Activated T-helper 1 cell treated with anti-CD3 and anti-CD28 coated beads, Interleukin-12 subunit alpha, Interleukin-12 subunit beta, Interleukin-2, Interleukin-4 antibody, amounts not matched to agents 30 ng/mL and 10 ng/mL and 1 ng/mL, durations not matched to agents 14 hours and 24 hours and 36 hours (primary cell): ENCODE measurements at regions of chr5 and their contacts with region 1.

Region 1: DNA sequence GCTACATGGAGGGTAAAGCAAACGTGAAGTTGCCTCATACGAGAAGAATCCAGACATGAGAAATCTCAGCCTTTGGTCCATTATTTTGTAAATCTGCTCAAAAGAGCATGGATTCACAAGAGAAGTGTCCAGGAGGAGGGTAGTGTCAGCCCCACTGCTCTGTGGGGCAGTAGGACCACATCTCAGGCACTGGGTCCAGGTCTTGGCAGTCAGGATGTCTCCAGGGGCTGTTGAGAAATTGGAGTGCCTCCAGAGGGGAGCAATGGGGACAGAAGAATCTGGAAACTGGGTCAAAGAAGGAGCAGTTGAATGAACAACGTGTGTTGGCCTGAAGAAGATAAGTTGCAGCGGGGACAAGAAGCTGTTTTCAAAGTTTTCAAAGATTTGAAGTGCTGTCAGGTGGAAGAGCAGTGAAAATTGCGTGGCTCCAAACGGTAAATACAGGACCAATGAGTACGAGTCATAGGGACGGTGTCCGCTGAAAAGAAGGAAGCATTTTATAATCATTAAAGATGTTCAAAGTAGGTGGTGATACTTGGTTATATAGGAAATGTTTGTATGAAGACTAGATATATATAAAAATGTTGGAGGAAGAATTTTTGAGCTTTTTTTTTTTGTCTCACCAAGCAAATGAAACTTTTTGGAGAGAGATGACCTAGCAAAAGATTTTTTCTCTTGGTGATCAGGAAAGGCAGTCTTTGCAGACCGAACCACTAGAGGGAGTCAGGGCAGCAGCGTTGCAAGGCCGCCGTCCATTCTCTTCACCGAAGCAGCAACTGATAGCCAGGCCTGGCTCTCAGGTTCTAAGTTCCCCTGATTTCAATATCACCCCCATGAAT is 57.1 kb upstream of the ZBED3 start:
- DNase-seq: peak; percentile 30
- H3K4me3 Mint-ChIP-seq: no peak overlapping the region
- H3K27ac Mint-ChIP-seq: no peak overlapping the region
- H3K4me1 Mint-ChIP-seq: peaks cover 13% of the 10 kb centered on the region
- H3K27me3 Mint-ChIP-seq: peaks cover 8% of the 10 kb centered on the region

Region 2: GRCh38 chr5:76867827-76868693 is 276.2 kb before region 1 on chr5:
- intact Hi-C with region 1: loop called (anchors 1 kb)
- DNase-seq: peak; percentile 50
- H3K4me3 Mint-ChIP-seq: no peak overlapping the region
- H3K27ac Mint-ChIP-seq: no peak overlapping the region
- H3K4me1 Mint-ChIP-seq: peaks cover 5% of the 10 kb centered on the region
- H3K27me3 Mint-ChIP-seq: peaks cover 2% of the 10 kb centered on the region

Region 3: GRCh38 chr5:77328930-77329647 is 184.9 kb after region 1 on chr5:
- intact Hi-C with region 1: loop called (anchors 10 kb)
- DNase-seq: no peak
- H3K4me3 Mint-ChIP-seq: peak overlapping the region; percentile 0
- H3K27ac Mint-ChIP-seq: peak overlapping the region; percentile 89
- H3K4me1 Mint-ChIP-seq: peaks cover 20% of the 10 kb centered on the region
- H3K27me3 Mint-ChIP-seq: peaks cover 8% of the 10 kb centered on the region

Region 4: DNA sequence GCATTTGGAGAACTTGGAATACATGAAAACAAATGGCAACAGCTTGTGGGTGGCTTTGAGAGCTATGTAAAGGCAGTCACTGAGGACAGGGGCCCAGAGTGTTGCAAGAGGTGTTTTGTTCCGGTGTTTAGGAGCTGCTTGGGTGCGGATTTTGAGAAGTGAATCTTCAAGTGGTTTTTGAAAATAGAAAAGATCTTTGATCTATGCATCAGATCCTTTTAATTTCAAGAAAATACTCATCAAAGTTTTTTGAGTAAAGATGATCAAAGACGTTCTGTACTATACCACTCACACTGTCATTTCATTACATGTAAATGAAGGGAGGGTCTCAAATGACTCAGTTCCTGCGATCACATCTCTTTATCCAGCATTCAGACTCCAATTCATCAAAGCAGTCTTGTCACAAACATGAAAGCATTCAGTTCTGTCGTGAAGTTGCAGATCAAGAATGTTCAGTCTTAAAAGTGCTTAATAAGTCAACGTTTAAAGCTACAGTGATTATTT is 235.4 kb after region 1 on chr5:
- intact Hi-C with region 1: loop called (anchors 1 kb)
- DNase-seq: peak; percentile 32
- H3K4me3 Mint-ChIP-seq: no peak overlapping the region
- H3K27ac Mint-ChIP-seq: peak overlapping the region; percentile 37
- H3K4me1 Mint-ChIP-seq: peaks cover 30% of the 10 kb centered on the region
- H3K27me3 Mint-ChIP-seq: peaks cover 2% of the 10 kb centered on the region

Region 5: DNA sequence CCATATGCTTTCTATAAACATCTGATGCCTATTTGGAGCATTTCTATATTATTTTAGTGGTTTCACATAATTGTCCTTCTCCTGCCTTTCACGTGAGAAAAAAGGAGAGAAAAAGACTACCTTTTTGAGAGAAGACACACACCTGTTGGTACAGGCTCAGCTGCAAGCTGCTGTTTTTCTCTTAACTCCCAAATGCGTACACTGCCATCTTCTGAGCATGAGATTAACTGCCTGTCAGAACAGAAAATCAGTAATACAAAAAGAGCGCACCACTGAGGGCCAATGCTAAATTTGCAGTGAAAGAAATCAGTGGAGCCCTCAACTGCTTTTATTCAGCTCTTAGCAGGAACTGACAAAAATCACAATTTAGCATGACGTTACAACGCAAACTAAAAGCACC is 293.0 kb after region 1 on chr5:
- intact Hi-C with region 1: loop called (anchors 1 kb)
- DNase-seq: no peak
- H3K4me3 Mint-ChIP-seq: no peak overlapping the region
- H3K27ac Mint-ChIP-seq: no peak overlapping the region
- H3K4me1 Mint-ChIP-seq: no peaks in the 10 kb centered on the region
- H3K27me3 Mint-ChIP-seq: no peaks in the 10 kb centered on the region

Region 6: GRCh38 chr5:77630258-77631089 is 486.3 kb after region 1 on chr5:
- intact Hi-C with region 1: loop called (anchors 5 kb)
- DNase-seq: peak; percentile 20
- H3K4me3 Mint-ChIP-seq: peak overlapping the region; percentile 72
- H3K27ac Mint-ChIP-seq: peak overlapping the region; percentile 72
- H3K4me1 Mint-ChIP-seq: peaks cover 28% of the 10 kb centered on the region
- H3K27me3 Mint-ChIP-seq: peaks cover 75% of the 10 kb centered on the region